Dendritic cell treated with granulocyte-macrophage colony-stimulating factor and Interleukin-4, amounts not matched to agents 40 ng/mL and 50 ng/mL, for 4 days (primary cell): ENCODE measurements at regions of chr6 and their contacts with region 1.

Region 1: DNA sequence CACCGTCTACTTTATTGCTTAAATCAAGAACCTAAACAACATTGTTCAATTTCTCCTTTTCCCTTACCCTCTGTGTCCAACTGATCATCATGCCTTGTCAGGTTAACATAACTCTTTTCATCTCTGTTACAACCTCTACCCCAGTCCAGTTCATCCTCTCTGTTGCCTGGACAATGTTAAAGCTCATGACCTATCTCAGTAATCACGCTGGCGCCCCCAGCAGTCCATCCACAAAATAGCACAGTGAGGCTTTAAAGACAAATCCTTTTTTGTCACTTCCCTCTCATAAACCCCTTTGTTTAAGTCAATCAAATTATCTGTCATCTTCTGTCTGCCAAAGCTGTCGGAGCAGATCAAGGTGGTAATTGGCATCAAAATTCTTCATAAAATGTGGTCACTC is 140.1 kb downstream of the QKI start:
- H3K4me3 Mint-ChIP-seq: no peak overlapping the region
- H3K27ac Mint-ChIP-seq: no peak overlapping the region
- H3K4me1 Mint-ChIP-seq: peaks cover 24% of the 10 kb centered on the region
- H3K27me3 Mint-ChIP-seq: no peaks in the 10 kb centered on the region

Region 2: GRCh38 chr6:163180874-163181541 is 373.7 kb before region 1 on chr6:
- intact Hi-C with region 1: loop called (anchors 5 kb)
- H3K4me3 Mint-ChIP-seq: no peak overlapping the region
- H3K27ac Mint-ChIP-seq: no peak overlapping the region
- H3K4me1 Mint-ChIP-seq: peaks cover 14% of the 10 kb centered on the region
- H3K27me3 Mint-ChIP-seq: peaks cover 14% of the 10 kb centered on the region